Cardiac septum (tissue), 1 donor: ENCODE measurements at regions of chr20 and their contacts with region 1.

Region 1: GRCh38 chr20:44960103-44960852 is at the start of gene TOMM34:
- DNase-seq: peak; percentile 98
- total RNA-seq, gene TOMM34: 10.7 TPM

Region 2: GRCh38 chr20:44885392-44886265 is 74.6 kb before region 1 on chr20 and contains the start of gene YWHAB:
- intact Hi-C with region 1: loop called (anchors 1 kb)
- DNase-seq: peak; percentile 99
- total RNA-seq, gene YWHAB: 118 TPM